Sigmoid colon (tissue), 7 donors: ENCODE measurements at regions of chr3 and their contacts with region 1.

Region 1: GRCh38 chr3:30606301-30607031 is at the start of gene TGFBR2:
- DNase-seq: peak; percentile 99
- H3K4me3 ChIP-seq: peak within 1 kb of the TSS; percentile 80 to 96 (median 92)
- H3K27ac ChIP-seq: peak within 1 kb of the TSS; percentile 95 to 99 (median 98)
- H3K4me1 ChIP-seq: peaks cover 0 to 49% (median 20%) of the 10 kb centered on the region in 4 donors
- H3K27me3 ChIP-seq: no peaks in the 10 kb centered on the region
- CTCF ChIP-seq: peak in 1 of 4 experiments; percentile 28
- EP300 ChIP-seq: peak in 1 of 4 donors; percentile 52
- POLR2A ChIP-seq: peak; percentile 71 to 72
- total RNA-seq, gene TGFBR2: 215 to 243 (median 234) TPM

Region 2: DNA sequence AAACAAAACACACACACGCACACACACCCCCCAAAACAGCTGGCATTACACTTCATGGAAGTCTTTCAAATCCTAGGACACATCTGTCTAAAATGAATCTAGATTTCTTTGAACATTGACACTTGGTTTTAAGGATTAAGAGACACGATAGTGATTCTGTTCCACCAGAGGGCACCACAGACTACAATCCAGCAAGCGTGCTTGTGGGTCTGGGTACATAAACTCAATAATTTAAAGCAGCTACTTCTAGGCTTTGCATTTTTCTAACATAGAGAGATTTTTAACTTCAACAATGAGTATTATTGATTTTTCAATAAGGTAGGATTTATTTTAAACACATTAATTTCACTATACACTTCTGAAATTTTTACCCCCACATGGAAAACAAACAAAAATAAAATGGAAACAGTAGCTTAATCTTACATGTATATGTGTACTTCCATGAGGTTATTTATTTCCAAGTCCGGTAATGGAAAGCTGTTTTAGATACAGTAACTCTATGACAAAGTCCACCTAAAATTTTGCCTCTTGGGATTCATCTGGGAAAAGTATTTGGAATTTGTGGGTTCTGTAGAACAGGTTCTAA is 564.1 kb before region 1 on chr3:
- intact Hi-C with region 1: loop called (anchors 10 kb)
- DNase-seq: peak; percentile 71
- H3K4me3 ChIP-seq: no peak overlapping the region
- H3K27ac ChIP-seq: no peak overlapping the region
- H3K4me1 ChIP-seq: peaks cover 0 to 5% (median 0%) of the 10 kb centered on the region in 4 donors
- H3K27me3 ChIP-seq: no peaks in the 10 kb centered on the region
- CTCF ChIP-seq: peak; percentile 51 to 75 (median 70)
- EP300 ChIP-seq: no peak
- POLR2A ChIP-seq: no peak

Region 3: DNA sequence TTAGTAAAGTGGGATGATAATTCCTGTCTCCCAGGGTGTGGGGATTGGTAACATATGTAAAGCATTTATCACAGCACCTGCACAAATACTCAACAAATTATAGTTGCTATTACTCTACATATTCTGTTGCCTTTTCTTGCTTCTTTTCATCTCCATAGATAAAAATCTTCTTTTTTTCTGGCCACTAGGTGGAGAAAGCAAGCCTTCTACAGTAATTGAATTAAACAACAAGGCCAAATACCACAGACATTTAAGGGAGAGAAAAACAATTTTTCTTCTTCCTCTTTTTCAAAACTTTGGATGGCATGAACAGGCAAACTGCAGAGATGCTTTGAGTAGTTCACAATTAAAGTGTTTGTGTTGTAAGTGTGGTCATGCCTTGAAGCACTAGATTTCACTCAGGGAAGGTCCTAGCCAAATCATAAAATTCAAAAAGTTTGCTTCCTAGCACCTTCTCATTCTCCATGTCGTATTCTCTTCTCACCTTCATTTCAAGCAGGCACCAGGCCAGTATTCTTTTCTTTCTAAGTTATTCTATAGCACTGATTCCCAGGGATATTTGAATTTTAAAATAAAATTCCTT is 493.5 kb before region 1 on chr3:
- intact Hi-C with region 1: loop called (anchors 5 kb)
- DNase-seq: no peak
- H3K4me3 ChIP-seq: no peak overlapping the region
- H3K27ac ChIP-seq: no peak overlapping the region
- H3K4me1 ChIP-seq: peaks cover 0 to 11% (median 8%) of the 10 kb centered on the region in 4 donors
- H3K27me3 ChIP-seq: no peaks in the 10 kb centered on the region
- CTCF ChIP-seq: peak; percentile 53 to 75 (median 63)
- EP300 ChIP-seq: no peak
- POLR2A ChIP-seq: no peak

Region 4: DNA sequence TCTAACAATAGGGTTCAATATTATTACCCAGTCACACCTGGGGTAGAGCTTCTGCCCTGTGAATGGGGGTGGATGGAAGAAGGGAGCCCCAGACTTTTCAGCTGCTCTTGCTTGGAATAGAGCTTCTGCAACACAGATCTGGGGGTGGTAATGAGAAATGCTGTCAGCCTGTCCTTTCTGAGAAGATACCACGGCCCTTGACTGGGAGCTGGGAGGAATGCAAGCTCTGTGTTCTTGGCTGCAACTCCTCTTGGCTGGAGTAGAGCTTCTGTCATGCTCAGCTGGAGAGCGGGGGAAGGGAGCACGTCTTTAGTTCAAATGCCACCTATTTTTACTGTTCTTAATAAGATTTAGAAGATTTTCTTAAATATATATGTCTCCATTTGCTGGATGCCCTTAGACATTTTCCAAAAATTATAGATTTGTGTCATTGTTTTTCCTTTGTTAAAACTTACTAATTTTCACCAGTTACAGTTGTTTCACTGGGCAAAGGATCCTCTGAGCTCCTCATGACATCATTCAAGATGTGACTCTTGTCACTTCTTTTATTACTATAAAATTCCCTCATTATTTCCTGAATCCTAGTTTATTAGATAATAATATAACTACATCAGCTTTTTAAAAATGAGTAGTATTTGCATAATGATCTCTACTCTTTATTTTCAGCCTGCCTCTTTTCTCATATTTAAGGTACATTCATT is 180.0 kb before region 1 on chr3:
- intact Hi-C with region 1: loop called (anchors 2 kb)
- DNase-seq: peak; percentile 91
- H3K4me3 ChIP-seq: no peak overlapping the region
- H3K27ac ChIP-seq: peak overlapping the region; percentile 58 to 73 (median 68)
- H3K4me1 ChIP-seq: peaks cover 0 to 26% (median 18%) of the 10 kb centered on the region in 4 donors
- H3K27me3 ChIP-seq: no peaks in the 10 kb centered on the region
- CTCF ChIP-seq: no peak
- EP300 ChIP-seq: peak in 1 of 4 donors; percentile 25
- POLR2A ChIP-seq: no peak

Region 5: GRCh38 chr3:30505866-30506520 is 100.5 kb before region 1 on chr3:
- intact Hi-C with region 1: no loop called
- DNase-seq: no peak
- H3K4me3 ChIP-seq: no peak overlapping the region
- H3K27ac ChIP-seq: no peak overlapping the region
- H3K4me1 ChIP-seq: peaks cover 0 to 5% (median under 1%) of the 10 kb centered on the region in 4 donors
- H3K27me3 ChIP-seq: no peaks in the 10 kb centered on the region
- CTCF ChIP-seq: no peak
- EP300 ChIP-seq: no peak
- POLR2A ChIP-seq: no peak

Region 6: GRCh38 chr3:30518181-30518864 is 88.1 kb before region 1 on chr3:
- intact Hi-C with region 1: loop called (anchors 2 kb)
- DNase-seq: peak; percentile 88
- H3K4me3 ChIP-seq: no peak overlapping the region
- H3K27ac ChIP-seq: peak overlapping the region; percentile 74 to 85 (median 82)
- H3K4me1 ChIP-seq: peaks cover 0 to 69% (median 41%) of the 10 kb centered on the region in 4 donors
- H3K27me3 ChIP-seq: no peaks in the 10 kb centered on the region
- CTCF ChIP-seq: no peak
- EP300 ChIP-seq: peak; percentile 84 to 97 (median 91)
- POLR2A ChIP-seq: no peak

Region 7: DNA sequence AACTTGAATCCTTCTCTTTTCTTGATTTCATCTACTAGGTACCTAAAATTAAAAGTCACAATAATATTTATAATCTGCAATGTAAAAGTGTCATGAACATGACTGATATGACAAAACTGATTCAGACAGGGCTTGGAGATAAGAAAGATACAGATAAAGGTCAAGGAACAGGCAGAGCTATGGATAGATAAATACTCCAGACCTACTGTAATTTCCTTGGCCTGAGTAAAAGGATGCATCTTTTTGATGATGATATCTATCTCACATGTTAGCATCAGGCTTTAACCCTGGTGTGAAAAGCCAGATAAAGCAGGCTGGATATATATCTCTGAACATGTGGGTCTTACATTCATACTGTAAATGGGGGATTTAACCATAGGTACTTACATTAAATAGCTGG is 179.9 kb after region 1 on chr3:
- intact Hi-C with region 1: no loop called
- DNase-seq: no peak
- H3K4me3 ChIP-seq: no peak overlapping the region
- H3K27ac ChIP-seq: no peak overlapping the region
- H3K4me1 ChIP-seq: no peaks in the 10 kb centered on the region
- H3K27me3 ChIP-seq: no peaks in the 10 kb centered on the region
- CTCF ChIP-seq: no peak
- EP300 ChIP-seq: no peak
- POLR2A ChIP-seq: no peak